ENCODE measurements at regions of chr7 and their contacts with region 1.

Region 1: GRCh38 chr7:77247206-77247850 is 47.7 kb upstream of the FGL2 start:
- DNase-seq: peak; percentile 78 to 94 (median 86)
- ATAC-seq: peak; percentile 99
- H3K4me3 ChIP-seq: no peak overlapping the region
- H3K4me3 Mint-ChIP-seq: no peak overlapping the region
- H3K27ac ChIP-seq: no peak overlapping the region
- H3K27ac Mint-ChIP-seq: no peak overlapping the region
- H3K4me1 ChIP-seq: no peaks in the 10 kb centered on the region
- H3K4me1 Mint-ChIP-seq: no peaks in the 10 kb centered on the region
- H3K27me3 ChIP-seq: no peaks in the 10 kb centered on the region
- H3K27me3 Mint-ChIP-seq: no peaks in the 10 kb centered on the region
- CTCF ChIP-seq: peak; percentile 85

Region 2: GRCh38 chr7:76515999-76516443 is 731.3 kb before region 1 on chr7:
- CTCF ChIA-PET with region 1: no interaction called
- POLR2A ChIA-PET with region 1: no interaction called
- intact Hi-C with region 1: loop called in 1 of 2 experiments (anchors 10 kb)
- DNase-seq: peak in 7 of 14 experiments; percentile 25 to 58 (median 37)
- ATAC-seq: peak; percentile 67
- H3K4me3 ChIP-seq: no peak overlapping the region
- H3K4me3 Mint-ChIP-seq: no peak overlapping the region
- H3K27ac ChIP-seq: no peak overlapping the region
- H3K27ac Mint-ChIP-seq: no peak overlapping the region
- H3K4me1 ChIP-seq: no peaks in the 10 kb centered on the region
- H3K4me1 Mint-ChIP-seq: no peaks in the 10 kb centered on the region
- H3K27me3 ChIP-seq: no peaks in the 10 kb centered on the region
- H3K27me3 Mint-ChIP-seq: no peaks in the 10 kb centered on the region
- CTCF ChIP-seq: peak; percentile 44

Region 3: GRCh38 chr7:77331938-77332695 is 84.8 kb after region 1 on chr7:
- CTCF ChIA-PET with region 1: interaction called, 4 read pairs
- POLR2A ChIA-PET with region 1: no interaction called
- intact Hi-C with region 1: loop called in 1 of 2 experiments (anchors 5 kb)
- DNase-seq: peak in 9 of 14 experiments; percentile 4 to 81 (median 25)
- ATAC-seq: peak; percentile 79
- H3K4me3 ChIP-seq: no peak overlapping the region
- H3K4me3 Mint-ChIP-seq: no peak overlapping the region
- H3K27ac ChIP-seq: no peak overlapping the region
- H3K27ac Mint-ChIP-seq: no peak overlapping the region
- H3K4me1 ChIP-seq: peaks cover 17% of the 10 kb centered on the region
- H3K4me1 Mint-ChIP-seq: peaks cover 52% of the 10 kb centered on the region
- H3K27me3 ChIP-seq: no peaks in the 10 kb centered on the region
- H3K27me3 Mint-ChIP-seq: no peaks in the 10 kb centered on the region
- CTCF ChIP-seq: peak; percentile 48